ENCODE measurements at regions of chr1 and their contacts with region 1.

Region 1: GRCh38 chr1:60315900-60316299 is 242.3 kb upstream of the C1orf87 start:
- DNase-seq: no peak

Region 2: GRCh38 chr1:60390593-60391282 is 74.8 kb after region 1 on chr1:
- intact Hi-C with region 1: loop called (anchors 2 kb)
- DNase-seq: no peak

Measured in posterior cingulate gyrus (tissue), 11 donors.